ENCODE measurements at regions of chr5 and their contacts with region 1.

Region 1: DNA sequence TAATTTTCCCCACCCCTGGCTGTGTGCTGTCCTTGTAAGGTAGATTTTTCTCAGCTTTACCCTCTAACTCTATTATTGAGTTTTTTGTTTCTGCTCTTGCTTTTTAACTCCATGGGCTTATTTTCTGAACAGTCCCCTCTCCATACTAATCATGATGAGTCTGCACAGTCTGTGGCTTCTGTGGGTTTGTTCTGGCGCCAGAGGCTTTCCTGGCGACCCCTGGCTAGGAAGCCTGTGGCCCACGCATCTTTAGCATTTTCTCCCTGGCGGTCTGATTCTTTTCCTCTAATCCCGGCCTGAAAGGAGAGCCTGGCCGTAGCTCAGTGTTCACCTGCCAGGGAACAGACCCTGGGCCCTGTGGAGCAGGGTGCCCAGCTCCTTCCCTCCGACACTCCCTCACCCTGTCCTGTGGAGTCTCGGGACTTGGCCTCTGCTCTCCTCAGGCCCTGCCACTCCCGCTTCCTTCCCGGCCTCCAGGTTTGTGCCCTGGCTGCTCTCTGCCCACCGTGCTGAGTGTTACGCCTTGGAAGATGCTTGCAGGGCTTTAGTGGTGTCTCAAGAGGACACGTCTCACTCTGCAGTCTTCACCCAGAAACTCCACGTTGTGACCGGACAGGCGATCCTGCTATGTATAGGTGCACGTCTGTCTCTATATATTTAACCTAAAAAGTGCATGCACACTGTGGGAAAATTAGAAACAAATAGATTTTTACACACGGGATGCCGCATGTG is 31.7 kb upstream of the LRRC14B start:
- DNase-seq: peak; percentile 55

Region 2: DNA sequence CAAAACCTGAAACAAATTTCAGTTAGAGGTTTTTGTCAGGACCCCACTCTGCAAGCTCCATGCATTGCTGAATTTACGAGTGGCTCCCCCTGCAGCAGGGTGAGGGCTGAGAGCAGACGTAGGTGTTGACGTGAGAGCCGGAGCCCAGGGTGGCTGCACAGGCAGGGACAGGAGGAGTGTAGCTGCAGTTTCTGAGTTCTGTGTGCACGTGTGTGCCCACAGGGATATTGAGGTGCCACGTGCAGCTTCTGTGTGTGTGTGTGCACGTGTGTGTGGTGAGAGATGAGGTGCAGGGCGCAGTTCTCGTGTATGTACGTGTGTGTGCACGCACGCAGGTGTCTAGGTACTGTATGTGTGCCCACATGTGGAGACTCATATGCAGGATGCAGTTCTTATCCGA is 53.0 kb before region 1 on chr5:
- intact Hi-C with region 1: no loop called
- DNase-seq: no peak

Region 3: GRCh38 chr5:121432-121831 is 38.2 kb before region 1 on chr5:
- intact Hi-C with region 1: no loop called
- DNase-seq: no peak

Region 4: GRCh38 chr5:136901-137300 is 22.7 kb before region 1 on chr5:
- intact Hi-C with region 1: no loop called
- DNase-seq: no peak

Region 5: DNA sequence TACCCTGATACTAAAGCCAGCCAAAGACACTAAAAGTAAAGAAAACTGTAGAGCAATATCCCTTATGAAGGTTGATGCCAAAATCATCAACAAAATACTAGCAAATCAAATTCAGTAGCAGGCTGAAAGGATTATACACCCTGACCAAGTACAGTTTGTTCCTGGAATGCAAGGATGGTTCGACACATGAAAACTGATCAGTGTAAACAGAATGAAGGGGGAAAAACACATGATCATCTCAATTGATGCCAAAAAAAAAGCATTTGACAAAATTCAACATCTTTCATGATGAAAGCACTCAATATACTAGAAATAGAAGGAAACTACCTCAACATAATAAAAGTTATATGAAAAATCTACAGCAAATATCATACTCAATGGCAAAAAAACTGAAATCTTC is 11.9 kb before region 1 on chr5:
- intact Hi-C with region 1: no loop called
- DNase-seq: no peak

Region 6: GRCh38 chr5:199950-200645 is 40.5 kb after region 1 on chr5:
- intact Hi-C with region 1: loop called in 1 of 2 experiments (anchors 2 kb)
- DNase-seq: no peak

Region 7: GRCh38 chr5:1724822-1725643 is 1565.4 kb after region 1 on chr5:
- intact Hi-C with region 1: loop called in 1 of 2 experiments (anchors 5 kb)
- DNase-seq: peak; percentile 76